Activated CD8-positive, alpha-beta T cell treated with anti-CD3 and anti-CD28 coated beads, Interleukin-2, amount 10 ng/mL, durations not matched to agents 7 days and 5 days (primary cell): ENCODE measurements at regions of chr5 and their contacts with region 1.

Region 1: DNA sequence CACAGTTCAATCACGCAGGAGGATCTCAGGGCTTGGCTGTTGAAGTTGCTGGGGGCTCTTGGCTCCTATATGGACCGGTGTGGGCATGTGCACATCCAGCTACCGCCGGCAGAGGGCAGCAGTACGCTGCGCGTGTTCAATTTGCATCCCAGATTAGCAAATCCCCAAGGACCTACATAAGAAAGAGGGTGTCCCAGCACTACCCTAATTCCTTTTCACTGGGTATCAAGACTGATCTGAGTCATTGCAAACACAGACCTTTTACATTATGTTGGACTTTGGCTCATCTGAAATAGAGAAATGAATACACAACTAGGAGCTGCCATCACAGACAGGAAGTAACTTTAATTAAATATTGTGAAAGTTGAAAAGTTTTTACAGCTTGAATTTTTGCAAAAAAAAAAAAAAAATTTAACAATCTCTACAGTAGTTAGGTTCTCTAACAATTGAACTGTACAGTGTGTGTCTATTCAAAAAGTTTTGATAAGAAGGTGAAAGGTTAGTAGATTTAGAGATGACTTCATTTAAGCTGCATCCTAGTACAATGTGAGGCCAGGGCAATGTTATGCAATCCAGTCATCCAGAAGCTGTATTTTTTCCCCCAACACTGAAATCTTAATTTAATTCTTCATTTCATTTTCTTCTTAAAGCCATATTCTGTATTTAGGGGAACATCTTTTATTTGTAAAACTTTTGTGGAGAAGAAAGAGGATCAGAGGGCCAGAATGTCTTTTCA is 404.0 kb downstream of the EBF1 start:
- DNase-seq: peak; percentile 74
- ATAC-seq: peak; percentile 85
- H3K4me3 Mint-ChIP-seq: no peak overlapping the region
- H3K27ac Mint-ChIP-seq: no peak overlapping the region
- H3K4me1 Mint-ChIP-seq: no peaks in the 10 kb centered on the region
- H3K27me3 Mint-ChIP-seq: peaks cover 3% of the 10 kb centered on the region

Region 2: GRCh38 chr5:158676642-158677469 is 18.9 kb before region 1 on chr5:
- CTCF ChIA-PET with region 1: interaction called, 20 read pairs
- POLR2A ChIA-PET with region 1: no interaction called
- DNase-seq: no peak
- ATAC-seq: no peak
- H3K4me3 Mint-ChIP-seq: no peak overlapping the region
- H3K27ac Mint-ChIP-seq: peak overlapping the region; percentile 28
- H3K4me1 Mint-ChIP-seq: peaks cover 10% of the 10 kb centered on the region
- H3K27me3 Mint-ChIP-seq: peaks cover 3% of the 10 kb centered on the region

Region 3: GRCh38 chr5:158812408-158812807 is 116.6 kb after region 1 on chr5:
- CTCF ChIA-PET with region 1: interaction called, 11 read pairs
- POLR2A ChIA-PET with region 1: no interaction called
- DNase-seq: peak; percentile 79
- ATAC-seq: peak; percentile 79
- H3K4me3 Mint-ChIP-seq: peak overlapping the region; percentile 7
- H3K27ac Mint-ChIP-seq: peak overlapping the region; percentile 81
- H3K4me1 Mint-ChIP-seq: peaks cover 41% of the 10 kb centered on the region
- H3K27me3 Mint-ChIP-seq: peaks cover 4% of the 10 kb centered on the region

Region 4: DNA sequence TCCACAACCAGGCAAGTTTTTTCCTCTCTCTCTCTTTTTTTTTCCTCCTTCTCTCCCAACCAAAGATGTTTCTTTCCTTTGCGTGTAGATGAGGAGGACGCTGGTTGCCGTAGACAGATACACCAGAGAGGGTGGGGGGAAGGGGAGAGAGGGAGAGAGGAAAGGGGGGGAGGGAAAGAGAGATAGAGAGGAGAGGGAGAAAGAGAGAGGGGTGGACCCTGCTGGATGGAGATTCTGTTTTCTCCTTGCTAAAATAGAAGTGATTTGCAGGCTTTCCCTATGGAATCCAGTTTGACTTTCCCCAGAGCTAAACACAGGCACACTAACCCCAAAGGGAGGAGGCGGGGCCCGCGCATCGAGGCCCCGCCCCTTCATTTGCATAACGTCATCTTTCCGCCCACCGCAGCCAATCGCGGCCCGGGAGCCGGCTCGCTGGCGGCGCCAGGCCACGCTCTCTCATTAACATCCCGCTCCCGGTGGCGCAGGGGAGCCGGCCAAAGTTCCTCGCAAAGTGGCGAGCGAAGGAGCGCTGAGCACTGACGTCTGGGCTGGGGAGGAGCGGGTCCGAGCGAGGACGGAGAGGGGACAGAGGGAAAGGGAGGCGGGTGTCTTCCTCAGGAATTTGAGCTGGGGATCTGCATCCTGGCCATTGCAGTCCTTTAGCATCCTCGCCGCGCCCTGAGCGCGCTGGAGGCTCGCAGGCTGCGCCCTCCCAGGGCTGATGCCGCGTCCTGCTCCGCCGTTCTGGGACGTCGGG is 404.4 kb after region 1 on chr5:
- CTCF ChIA-PET with region 1: interaction called, 173 read pairs
- POLR2A ChIA-PET with region 1: interaction called, 3 read pairs
- DNase-seq: peak; percentile 89
- ATAC-seq: peak; percentile 87
- H3K4me3 Mint-ChIP-seq: peak overlapping the region; percentile 83
- H3K27ac Mint-ChIP-seq: peak overlapping the region; percentile 79
- H3K4me1 Mint-ChIP-seq: peaks cover 38% of the 10 kb centered on the region
- H3K27me3 Mint-ChIP-seq: peaks cover 72% of the 10 kb centered on the region

Region 5: DNA sequence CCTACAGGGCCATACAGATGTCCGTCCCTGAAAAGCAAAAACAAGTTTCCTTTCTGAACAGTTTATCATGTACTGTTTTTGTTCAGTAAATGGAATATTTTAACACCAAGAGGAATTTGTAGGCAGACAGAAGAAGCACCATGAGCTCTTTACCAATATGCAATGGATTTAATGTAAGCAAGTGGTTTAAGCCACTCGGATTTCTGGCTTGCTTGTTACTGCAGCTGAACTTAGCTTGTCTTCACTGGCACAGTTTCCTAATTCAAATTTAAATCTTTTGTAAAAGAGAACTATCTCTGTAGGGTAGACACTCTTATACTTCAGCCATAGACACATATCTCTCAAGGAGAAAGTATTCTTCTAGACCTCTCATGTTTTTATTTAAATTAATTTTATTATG is 416.7 kb after region 1 on chr5:
- CTCF ChIA-PET with region 1: interaction called, 173 read pairs
- POLR2A ChIA-PET with region 1: interaction called, 5 read pairs
- DNase-seq: no peak
- ATAC-seq: no peak
- H3K4me3 Mint-ChIP-seq: no peak overlapping the region
- H3K27ac Mint-ChIP-seq: no peak overlapping the region
- H3K4me1 Mint-ChIP-seq: no peaks in the 10 kb centered on the region
- H3K27me3 Mint-ChIP-seq: peaks cover 25% of the 10 kb centered on the region

Region 6: GRCh38 chr5:159133041-159133741 is 437.4 kb after region 1 on chr5:
- CTCF ChIA-PET with region 1: interaction called, 45 read pairs
- POLR2A ChIA-PET with region 1: no interaction called
- DNase-seq: no peak
- ATAC-seq: peak; percentile 49
- H3K4me3 Mint-ChIP-seq: no peak overlapping the region
- H3K27ac Mint-ChIP-seq: no peak overlapping the region
- H3K4me1 Mint-ChIP-seq: no peaks in the 10 kb centered on the region
- H3K27me3 Mint-ChIP-seq: peaks cover 7% of the 10 kb centered on the region